Heart left ventricle (tissue), 16 donors: ENCODE measurements at regions of chrX and their contacts with region 1.

Region 1: DNA sequence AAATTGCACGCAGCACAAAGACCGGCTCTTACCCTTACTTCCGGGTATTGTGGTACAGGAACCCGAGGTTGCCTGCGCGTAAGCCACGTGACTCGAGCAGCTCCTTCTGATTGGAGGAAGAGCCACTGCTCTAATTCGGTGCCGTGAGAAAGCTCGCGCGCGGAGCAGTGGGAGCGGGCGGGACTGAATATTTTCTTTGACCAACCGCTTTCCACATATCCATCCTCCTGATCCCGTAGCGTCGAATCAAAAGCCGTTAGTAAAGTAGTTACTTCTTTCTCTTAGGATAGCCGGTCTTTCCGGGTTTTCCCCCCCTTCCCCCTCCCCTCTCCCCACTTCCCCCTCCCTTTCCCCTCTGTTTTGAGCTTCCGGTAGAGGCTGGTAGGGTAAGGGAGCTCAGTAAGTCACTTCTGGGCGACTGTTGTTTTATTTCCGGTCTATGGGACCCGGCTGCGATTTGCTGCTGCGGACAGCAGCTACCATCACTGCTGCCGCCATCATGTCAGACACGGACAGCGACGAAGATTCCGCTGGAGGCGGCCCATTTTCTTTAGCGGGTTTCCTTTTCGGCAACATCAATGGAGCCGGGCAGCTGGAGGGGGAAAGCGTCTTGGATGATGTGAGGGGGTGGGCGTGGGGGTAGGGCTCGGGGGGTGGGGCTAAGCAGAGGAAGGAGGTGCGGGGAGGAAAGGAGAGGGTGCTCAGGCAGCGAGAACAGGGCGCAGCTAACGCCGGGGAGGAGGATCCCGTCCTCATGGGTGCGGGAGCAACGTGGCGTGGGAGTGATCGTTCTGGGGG is at the start of gene TAF1:
- DNase-seq: peak; percentile 93 to 96 (median 94)
- ATAC-seq: peak; percentile 95 to 98 (median 97)
- H3K4me3 ChIP-seq: peak within 1 kb of the TSS; percentile 52 to 93 (median 72)
- H3K27ac ChIP-seq: peak within 1 kb of the TSS; percentile 77 to 96 (median 92)
- H3K4me1 ChIP-seq: peaks cover 0 to 19% (median 10%) of the 10 kb centered on the region in 12 donors
- H3K27me3 ChIP-seq: no peaks in the 10 kb centered on the region
- CTCF ChIP-seq: no peak
- POLR2A ChIP-seq: peak in 1 of 2 donors; percentile 54
- total RNA-seq, gene TAF1: 14.3 to 27.8 (median 20.8) TPM

Region 2: GRCh38 chrX:71283403-71284143 is 82.5 kb before region 1 on chrX and contains the start of gene NONO:
- intact Hi-C with region 1: loop called in 2 of 10 experiments (anchors 10 kb)
- DNase-seq: peak; percentile 82 to 93 (median 88)
- ATAC-seq: peak; percentile 93 to 97 (median 95)
- H3K4me3 ChIP-seq: peak within 1 kb of the TSS; percentile 42 to 83 (median 70)
- H3K27ac ChIP-seq: peak within 1 kb of the TSS; percentile 71 to 95 (median 90)
- H3K4me1 ChIP-seq: peaks cover 0 to 25% (median 19%) of the 10 kb centered on the region in 12 donors
- H3K27me3 ChIP-seq: no peaks in the 10 kb centered on the region
- CTCF ChIP-seq: peak in 4 of 12 donors; percentile 6 to 44 (median 22)
- POLR2A ChIP-seq: no peak
- total RNA-seq, gene NONO: 97.0 to 177 (median 113) TPM